Activated CD4-positive, alpha-beta T cell treated with anti-CD3 and anti-CD28 coated beads for 36 hours (primary cell): ENCODE measurements at regions of chr2 and their contacts with region 1.

Region 1: DNA sequence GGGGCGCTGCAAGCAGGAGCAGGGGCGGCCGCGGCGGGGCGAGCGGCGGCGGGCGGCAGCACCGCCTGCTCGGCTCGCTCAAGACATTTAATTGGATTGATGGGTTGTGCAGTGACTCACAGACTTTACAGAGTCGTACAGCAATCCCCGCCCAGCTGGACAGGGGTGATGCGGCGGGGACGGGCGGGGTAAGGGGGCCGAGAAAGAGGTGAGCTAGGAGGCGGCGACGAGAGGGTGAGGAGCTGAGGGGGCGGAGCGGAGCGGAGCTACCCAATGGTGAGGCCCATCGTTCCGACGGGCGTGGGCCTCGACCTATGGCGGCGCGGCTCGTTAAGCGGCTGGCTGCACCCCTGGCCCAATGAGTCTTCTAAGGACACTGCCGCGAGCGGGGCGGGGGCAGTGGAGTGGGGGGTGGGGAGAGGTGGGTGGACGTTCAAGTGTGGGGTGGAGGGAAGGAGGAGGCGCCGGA is 97.1 kb upstream of the SERTAD2 start:
- DNase-seq: peak; percentile 99
- ATAC-seq: peak; percentile 90
- H3K4me3 Mint-ChIP-seq: peak overlapping the region; percentile 92
- H3K27ac Mint-ChIP-seq: peak overlapping the region; percentile 92
- H3K4me1 Mint-ChIP-seq: peaks cover 24% of the 10 kb centered on the region
- H3K27me3 Mint-ChIP-seq: no peaks in the 10 kb centered on the region

Region 2: GRCh38 chr2:63841254-63842022 is 909.4 kb before region 1 on chr2 and contains the start of gene UGP2:
- CTCF ChIA-PET with region 1: no interaction called
- POLR2A ChIA-PET with region 1: no interaction called
- intact Hi-C with region 1: loop called in 1 of 2 experiments (anchors 2 kb)
- DNase-seq: peak; percentile 91
- ATAC-seq: peak; percentile 72
- H3K4me3 Mint-ChIP-seq: peak within 1 kb of the TSS; percentile 92
- H3K27ac Mint-ChIP-seq: peak within 1 kb of the TSS; percentile 98
- H3K4me1 Mint-ChIP-seq: peaks cover 39% of the 10 kb centered on the region
- H3K27me3 Mint-ChIP-seq: no peaks in the 10 kb centered on the region
- total RNA-seq, gene UGP2: 98.4 to 144 TPM

Region 3: DNA sequence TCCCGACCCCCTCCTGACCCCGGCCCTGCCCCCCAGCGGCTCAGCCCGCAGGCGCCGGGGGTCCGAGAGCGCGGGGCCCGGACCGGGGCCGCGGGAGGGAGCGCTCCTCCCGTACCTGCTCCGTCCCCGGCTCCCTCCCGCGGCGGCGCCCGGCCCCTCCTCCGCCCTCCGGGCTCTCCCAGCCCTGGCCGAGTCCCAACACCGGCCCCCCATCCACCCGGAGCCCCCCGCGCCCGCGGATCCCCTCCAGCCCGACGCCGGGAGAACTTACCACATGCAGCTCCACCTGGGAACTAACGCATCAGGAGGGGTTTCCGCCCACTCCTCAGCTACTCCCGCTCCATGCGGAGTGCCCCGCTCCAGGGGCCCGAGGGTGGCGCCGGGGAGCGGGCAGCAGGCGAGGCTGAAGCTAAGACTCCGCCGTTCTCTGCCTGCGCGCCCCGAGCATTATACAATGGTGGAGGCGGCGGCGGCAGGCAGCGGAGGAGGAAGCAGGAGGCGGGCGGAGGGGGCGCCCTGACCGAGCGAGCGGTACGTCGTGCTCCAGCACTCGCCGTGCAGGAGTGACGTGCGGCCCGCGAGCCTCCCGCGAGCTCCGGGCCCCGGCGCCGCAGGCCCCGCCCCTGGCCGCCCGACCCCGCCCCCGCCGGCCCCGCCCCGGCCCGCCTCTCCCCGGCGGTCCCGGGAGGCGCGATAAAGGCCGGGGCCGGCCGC is 97.3 kb before region 1 on chr2 and contains the start of gene SERTAD2:
- CTCF ChIA-PET with region 1: interaction called, 50 read pairs
- POLR2A ChIA-PET with region 1: interaction called, 28 read pairs
- intact Hi-C with region 1: loop called (anchors 1 to 2 kb)
- DNase-seq: peak; percentile 90
- ATAC-seq: peak; percentile 80
- H3K4me3 Mint-ChIP-seq: peak within 1 kb of the TSS; percentile 85
- H3K27ac Mint-ChIP-seq: peak within 1 kb of the TSS; percentile 94
- H3K4me1 Mint-ChIP-seq: peaks cover 76% of the 10 kb centered on the region
- H3K27me3 Mint-ChIP-seq: no peaks in the 10 kb centered on the region
- total RNA-seq, gene SERTAD2: 14.5 to 14.9 TPM

Region 4: DNA sequence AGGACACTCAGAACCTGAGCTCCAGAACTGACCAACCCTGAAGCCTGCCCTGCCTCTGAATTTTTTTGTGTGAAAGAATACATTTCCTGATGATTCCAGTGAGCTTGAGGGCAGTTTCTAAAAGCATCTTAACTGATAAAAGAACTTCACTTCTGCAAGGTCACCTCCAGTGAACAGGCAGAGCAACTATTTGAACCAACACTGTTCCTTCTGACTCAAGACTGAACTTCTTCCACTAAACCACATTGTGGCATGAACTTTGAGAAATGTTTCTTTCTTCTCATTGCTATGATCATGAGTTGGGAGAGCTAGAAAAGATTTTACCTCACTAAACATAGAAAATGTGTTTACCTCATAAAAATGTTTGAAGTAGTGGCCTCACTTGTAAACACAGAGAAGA is 13.3 kb before region 1 on chr2:
- CTCF ChIA-PET with region 1: interaction called, 12 read pairs
- POLR2A ChIA-PET with region 1: no interaction called
- intact Hi-C with region 1: loop called in 1 of 2 experiments (anchors 1 kb)
- DNase-seq: peak; percentile 7
- ATAC-seq: peak; percentile 83
- H3K4me3 Mint-ChIP-seq: peak overlapping the region; percentile 12
- H3K27ac Mint-ChIP-seq: peak overlapping the region; percentile 55
- H3K4me1 Mint-ChIP-seq: peaks cover 27% of the 10 kb centered on the region
- H3K27me3 Mint-ChIP-seq: no peaks in the 10 kb centered on the region

Region 5: DNA sequence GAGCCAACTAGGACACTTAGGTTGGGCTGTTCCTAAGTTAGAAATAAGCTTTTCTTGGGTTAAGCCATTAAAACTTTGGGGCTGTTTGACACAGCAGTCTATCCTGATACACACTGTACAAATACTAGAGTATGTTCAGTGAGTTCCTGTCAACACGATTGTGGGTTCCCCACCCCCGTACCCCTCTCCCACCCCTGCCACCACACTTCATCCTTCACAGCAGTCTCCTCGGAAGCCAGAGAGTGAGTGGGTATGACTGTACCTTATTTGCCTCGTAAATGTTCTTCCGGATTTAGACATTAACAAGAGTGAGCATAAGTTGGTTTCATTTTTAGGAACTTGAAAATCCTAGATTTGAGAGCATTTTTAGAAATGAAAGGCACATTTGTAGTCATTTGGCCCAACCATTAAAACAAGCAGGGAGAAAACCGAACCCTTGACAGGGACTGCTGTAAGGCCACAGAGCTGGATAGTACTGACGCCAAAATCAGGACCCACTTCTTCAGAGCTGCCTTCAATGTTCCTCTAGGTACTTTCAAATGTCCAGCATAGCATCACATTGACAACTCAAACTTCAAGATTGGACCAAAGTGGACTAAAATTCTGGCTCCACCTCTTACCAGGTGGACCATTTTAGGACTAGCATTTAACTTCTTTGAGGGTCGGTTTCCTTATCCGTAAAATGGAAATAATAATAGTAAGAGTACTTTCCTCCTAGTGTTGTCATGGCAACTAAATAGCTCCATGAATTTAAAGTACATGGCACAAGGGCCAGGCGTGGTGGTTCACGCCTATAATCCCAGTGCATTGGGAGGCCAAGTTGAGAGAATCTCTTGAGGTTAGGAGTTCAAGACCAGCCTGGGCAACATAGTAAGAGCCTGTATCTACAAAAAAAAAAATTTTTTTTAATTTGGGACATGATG is 69.2 kb after region 1 on chr2:
- CTCF ChIA-PET with region 1: no interaction called
- POLR2A ChIA-PET with region 1: no interaction called
- intact Hi-C with region 1: loop called in 1 of 2 experiments (anchors 2 kb)
- DNase-seq: peak; percentile 75
- ATAC-seq: peak; percentile 98
- H3K4me3 Mint-ChIP-seq: peak overlapping the region; percentile 35
- H3K27ac Mint-ChIP-seq: peak overlapping the region; percentile 92
- H3K4me1 Mint-ChIP-seq: peaks cover 23% of the 10 kb centered on the region
- H3K27me3 Mint-ChIP-seq: no peaks in the 10 kb centered on the region

Region 6: DNA sequence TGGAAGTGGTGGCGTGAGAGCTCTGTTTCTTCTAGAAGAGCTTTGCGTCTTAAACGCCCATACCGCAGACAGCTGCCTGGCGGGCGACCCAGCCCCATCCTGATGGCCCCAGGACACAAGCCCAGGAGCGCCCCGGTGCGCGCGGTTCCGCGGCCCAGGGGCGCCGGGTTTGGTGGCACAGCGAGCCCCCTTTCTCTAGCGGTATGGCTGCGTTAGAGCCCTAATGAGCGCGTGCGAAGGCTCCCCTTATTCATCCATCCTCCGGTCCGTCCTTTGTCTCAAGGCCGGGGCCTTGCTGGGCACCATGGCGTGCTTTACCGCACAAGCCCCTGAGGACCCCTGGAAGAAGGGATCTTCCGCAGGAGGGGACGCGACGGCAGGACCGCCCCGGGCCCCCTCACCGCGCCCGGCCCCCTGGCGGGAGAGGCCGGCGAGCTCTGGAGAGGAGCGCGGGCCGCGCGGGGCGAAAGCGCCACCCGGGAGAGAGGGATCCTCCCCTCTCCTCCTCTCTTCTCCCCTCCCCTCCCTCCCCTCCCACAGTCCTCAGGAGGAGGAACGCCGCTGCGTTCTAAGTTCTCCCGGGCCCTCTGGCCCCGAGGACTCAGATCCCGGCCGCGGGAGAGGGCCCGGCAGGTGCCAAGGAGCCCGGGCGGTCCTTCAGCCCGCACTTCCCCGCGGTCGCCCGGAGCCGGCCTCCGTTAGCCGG is 237.7 kb after region 1 on chr2:
- CTCF ChIA-PET with region 1: no interaction called
- POLR2A ChIA-PET with region 1: no interaction called
- intact Hi-C with region 1: loop called in 1 of 2 experiments (anchors 1 kb)
- DNase-seq: peak; percentile 74
- ATAC-seq: peak; percentile 37
- H3K4me3 Mint-ChIP-seq: peak overlapping the region; percentile 68
- H3K27ac Mint-ChIP-seq: peak overlapping the region; percentile 55
- H3K4me1 Mint-ChIP-seq: peaks cover 46% of the 10 kb centered on the region
- H3K27me3 Mint-ChIP-seq: peaks cover 4% of the 10 kb centered on the region

Region 7: DNA sequence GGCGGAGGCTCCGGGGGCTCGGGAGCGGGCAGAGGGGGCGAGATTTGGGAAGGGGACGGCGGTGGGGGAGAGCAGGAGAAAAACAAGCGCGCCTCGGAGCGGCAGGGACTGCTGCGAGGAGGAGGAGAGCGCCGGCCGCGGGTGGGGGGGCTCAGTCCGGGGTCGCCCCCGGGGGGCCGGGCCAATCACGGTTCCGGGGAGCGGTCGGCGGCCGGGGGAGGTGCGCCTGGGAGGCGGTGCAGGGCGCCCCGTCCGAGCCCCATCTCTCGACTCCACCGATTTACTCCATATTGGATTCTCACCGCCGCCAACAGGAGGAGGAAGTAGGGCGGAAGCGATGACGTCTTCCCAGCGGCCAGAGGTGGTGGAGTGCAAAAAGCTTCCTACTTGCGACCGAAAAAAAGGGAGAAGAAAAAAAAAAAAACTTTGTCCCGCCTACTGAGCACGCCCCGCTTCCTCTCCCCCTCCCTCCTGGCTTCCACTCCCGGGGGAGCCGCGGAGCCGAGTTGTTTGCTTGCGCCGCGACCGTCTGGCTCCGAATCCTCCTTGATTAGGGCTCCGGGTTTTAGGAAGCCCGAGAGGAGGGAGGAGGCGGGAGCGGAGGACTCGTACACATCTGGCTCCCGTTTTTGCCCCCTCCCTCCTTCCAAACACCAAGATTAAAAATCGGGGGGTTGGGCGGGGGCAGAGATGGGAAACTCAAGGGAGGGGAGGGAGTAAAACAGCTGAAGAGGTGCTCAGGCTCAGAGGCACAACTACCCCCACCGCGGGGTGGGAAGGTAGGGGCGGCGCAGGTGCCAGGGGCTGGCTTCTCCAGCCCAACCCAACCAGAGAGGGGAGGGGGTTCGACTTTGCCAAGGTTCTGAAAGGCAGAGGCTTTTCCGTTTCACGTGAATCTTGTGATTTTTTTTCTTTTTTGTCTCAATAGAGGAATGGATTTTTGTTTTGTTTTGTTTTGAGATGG is 681.7 kb after region 1 on chr2 and contains the start of gene SPRED2:
- CTCF ChIA-PET with region 1: no interaction called
- POLR2A ChIA-PET with region 1: no interaction called
- intact Hi-C with region 1: loop called in 1 of 2 experiments (anchors 5 kb)
- DNase-seq: peak; percentile 87
- ATAC-seq: peak; percentile 50
- H3K4me3 Mint-ChIP-seq: peak within 1 kb of the TSS; percentile 85
- H3K27ac Mint-ChIP-seq: peak within 1 kb of the TSS; percentile 73
- H3K4me1 Mint-ChIP-seq: peaks cover 16% of the 10 kb centered on the region
- H3K27me3 Mint-ChIP-seq: peaks cover 23% of the 10 kb centered on the region
- total RNA-seq, gene SPRED2: 6.7 to 7.9 TPM